Endothelial cell of umbilical vein (primary cell): ENCODE measurements at regions of chr6 and their contacts with region 1.

Region 1: GRCh38 chr6:116010790-116011401 is 49.8 kb downstream of the FRK start:
- DNase-seq: peak; percentile 73
- H3K4me3 ChIP-seq: no peak overlapping the region
- H3K27ac ChIP-seq: no peak overlapping the region
- H3K4me1 ChIP-seq: peaks cover 11% of the 10 kb centered on the region
- H3K27me3 ChIP-seq: no peaks in the 10 kb centered on the region
- CTCF ChIP-seq: peak; percentile 72 to 81
- POLR2A ChIP-seq: no peak

Region 2: GRCh38 chr6:115999235-115999634 is 11.7 kb before region 1 on chr6:
- CTCF ChIA-PET with region 1: interaction called, 19 read pairs
- POLR2A ChIA-PET with region 1: no interaction called
- dilution Hi-C with region 1: no loop called
- intact Hi-C with region 1: no loop called
- DNase-seq: no peak
- H3K4me3 ChIP-seq: no peak overlapping the region
- H3K27ac ChIP-seq: no peak overlapping the region
- H3K4me1 ChIP-seq: no peaks in the 10 kb centered on the region
- H3K27me3 ChIP-seq: peaks cover 0 to 3% of the 10 kb centered on the region in 2 experiments
- CTCF ChIP-seq: no peak
- POLR2A ChIP-seq: no peak

Region 3: GRCh38 chr6:116060572-116061283 is 49.8 kb after region 1 on chr6 and contains the start of gene FRK:
- CTCF ChIA-PET with region 1: interaction called, 14 read pairs
- POLR2A ChIA-PET with region 1: no interaction called
- dilution Hi-C with region 1: no loop called
- intact Hi-C with region 1: no loop called
- DNase-seq: peak; percentile 47
- H3K4me3 ChIP-seq: no peak within 1 kb of the TSS
- H3K27ac ChIP-seq: no peak within 1 kb of the TSS
- H3K4me1 ChIP-seq: no peaks in the 10 kb centered on the region
- H3K27me3 ChIP-seq: no peaks in the 10 kb centered on the region
- CTCF ChIP-seq: no peak
- POLR2A ChIP-seq: no peak
- total RNA-seq, gene FRK: 0.05 TPM in 1 of 2 replicates, not detected in the other

Region 4: DNA sequence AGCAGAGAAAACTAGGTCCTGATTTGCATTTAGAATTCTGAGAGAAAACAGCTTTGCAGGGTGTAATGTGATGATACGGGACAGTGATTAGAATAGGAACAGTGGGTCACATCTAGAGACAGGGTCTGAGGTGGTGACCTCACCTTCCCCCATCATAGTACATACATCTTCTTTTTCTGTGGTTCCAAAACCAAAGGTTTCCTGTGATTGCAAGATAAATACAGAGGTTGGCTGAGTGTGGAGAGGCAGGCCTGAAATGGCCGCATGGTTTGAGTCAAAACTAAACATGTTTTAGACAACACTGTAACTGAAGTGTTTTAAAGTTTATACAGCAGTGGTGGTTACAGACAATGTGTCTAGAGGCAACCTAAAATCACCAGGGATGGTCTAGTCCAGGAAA is 79.4 kb after region 1 on chr6:
- CTCF ChIA-PET with region 1: interaction called, 216 read pairs
- POLR2A ChIA-PET with region 1: no interaction called
- dilution Hi-C with region 1: no loop called
- intact Hi-C with region 1: no loop called
- DNase-seq: no peak
- H3K4me3 ChIP-seq: no peak overlapping the region
- H3K27ac ChIP-seq: no peak overlapping the region
- H3K4me1 ChIP-seq: no peaks in the 10 kb centered on the region
- H3K27me3 ChIP-seq: no peaks in the 10 kb centered on the region
- CTCF ChIP-seq: no peak
- POLR2A ChIP-seq: no peak

Region 5: GRCh38 chr6:116111552-116112528 is 100.9 kb after region 1 on chr6:
- CTCF ChIA-PET with region 1: interaction called, 30 read pairs
- POLR2A ChIA-PET with region 1: no interaction called
- dilution Hi-C with region 1: no loop called
- intact Hi-C with region 1: no loop called
- DNase-seq: peak; percentile 46
- H3K4me3 ChIP-seq: no peak overlapping the region
- H3K27ac ChIP-seq: no peak overlapping the region
- H3K4me1 ChIP-seq: no peaks in the 10 kb centered on the region
- H3K27me3 ChIP-seq: no peaks in the 10 kb centered on the region
- CTCF ChIP-seq: peak; percentile 56 to 69
- POLR2A ChIP-seq: no peak